AG04449 (cell line): ENCODE measurements at regions of chr2 and their contacts with region 1.

Region 1: DNA sequence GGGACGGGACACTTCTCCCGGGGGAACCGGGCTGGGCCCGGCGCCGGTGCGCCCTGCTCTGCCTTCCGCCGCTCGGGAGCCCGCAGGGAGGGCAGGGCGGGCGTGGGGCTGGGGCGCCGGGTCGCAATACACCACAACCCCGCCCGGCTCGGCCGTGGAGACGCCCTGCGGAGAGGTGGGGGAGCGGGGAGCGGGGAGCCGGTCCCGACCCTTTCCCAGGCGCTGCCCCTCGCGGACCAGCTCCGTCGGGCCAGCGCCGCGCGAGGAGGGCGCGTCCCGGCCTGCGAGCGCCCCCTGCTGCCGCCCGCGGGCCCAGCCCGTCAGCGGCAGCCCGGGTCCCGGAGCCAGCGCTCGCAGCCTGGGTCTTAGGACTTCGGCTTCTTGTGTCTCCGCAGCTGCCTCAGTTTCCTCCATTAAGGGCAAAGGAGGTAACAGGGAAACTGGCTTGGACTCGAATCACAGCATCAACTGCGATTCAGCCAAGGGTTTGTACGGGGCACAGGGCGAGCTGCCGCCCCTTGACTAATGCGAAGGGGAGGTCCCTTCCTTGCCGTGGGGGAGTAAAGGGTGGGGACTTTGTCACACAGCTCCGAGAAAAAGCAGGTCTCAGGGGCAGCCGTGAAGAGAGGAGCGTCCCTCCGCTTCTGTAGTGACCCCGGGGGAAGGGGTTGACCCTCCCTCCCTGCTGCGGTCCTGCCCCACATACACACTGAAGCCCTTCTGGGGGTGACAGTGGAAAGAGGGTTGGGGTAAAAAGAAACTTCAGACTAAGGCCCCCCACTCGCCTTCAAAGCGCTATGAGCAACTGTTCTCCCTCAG is 717 bp upstream of the ADRA2B start:
- DNase-seq: no peak
- H3K4me3 ChIP-seq: peak overlapping the region; percentile 32
- CTCF ChIP-seq: peak; percentile 43

Region 2: DNA sequence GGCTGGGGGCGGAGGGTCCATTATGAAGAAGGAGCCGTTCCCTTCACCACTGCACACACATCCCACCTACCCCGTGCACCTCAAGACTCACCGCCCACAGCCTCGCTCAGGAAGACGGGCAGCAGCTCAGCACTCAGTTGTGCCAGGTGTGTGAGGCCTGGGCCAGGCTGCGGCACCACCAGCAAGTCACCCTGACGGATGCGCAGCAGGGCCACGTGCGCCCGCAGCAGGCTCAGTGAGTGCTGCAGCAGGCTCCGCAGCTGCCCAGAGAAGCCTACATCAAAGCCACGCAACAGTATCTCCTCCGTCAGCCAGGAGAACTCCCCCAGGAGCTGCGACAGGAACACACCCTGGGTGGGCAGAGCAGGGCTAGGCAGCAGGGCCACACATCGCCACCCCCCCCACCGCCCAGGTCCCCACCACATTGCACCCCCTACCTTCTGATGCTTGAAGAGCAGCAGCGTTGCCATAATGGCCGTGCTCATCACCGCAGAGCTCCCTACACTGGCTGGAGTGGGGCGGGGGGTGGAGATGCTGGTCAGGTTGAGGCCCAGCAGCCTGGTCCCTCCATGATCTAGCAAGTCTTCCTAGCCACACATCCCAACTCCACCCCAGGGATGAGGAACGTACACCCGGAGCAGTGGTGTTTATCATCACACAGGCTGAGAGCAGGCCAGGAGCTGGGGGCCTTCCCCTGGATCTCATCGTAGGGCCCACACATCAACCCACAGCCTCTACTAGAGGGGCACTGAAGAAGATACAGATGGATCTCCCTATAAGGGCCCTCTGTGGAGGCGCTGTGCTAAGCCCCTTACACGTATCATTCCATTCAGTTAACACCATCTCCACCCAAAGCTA is 92.5 kb before region 1 on chr2:
- CTCF ChIA-PET with region 1: interaction called, 63 read pairs
- POLR2A ChIA-PET with region 1: no interaction called
- DNase-seq: no peak
- H3K4me3 ChIP-seq: no peak overlapping the region
- CTCF ChIP-seq: no peak

Region 3: DNA sequence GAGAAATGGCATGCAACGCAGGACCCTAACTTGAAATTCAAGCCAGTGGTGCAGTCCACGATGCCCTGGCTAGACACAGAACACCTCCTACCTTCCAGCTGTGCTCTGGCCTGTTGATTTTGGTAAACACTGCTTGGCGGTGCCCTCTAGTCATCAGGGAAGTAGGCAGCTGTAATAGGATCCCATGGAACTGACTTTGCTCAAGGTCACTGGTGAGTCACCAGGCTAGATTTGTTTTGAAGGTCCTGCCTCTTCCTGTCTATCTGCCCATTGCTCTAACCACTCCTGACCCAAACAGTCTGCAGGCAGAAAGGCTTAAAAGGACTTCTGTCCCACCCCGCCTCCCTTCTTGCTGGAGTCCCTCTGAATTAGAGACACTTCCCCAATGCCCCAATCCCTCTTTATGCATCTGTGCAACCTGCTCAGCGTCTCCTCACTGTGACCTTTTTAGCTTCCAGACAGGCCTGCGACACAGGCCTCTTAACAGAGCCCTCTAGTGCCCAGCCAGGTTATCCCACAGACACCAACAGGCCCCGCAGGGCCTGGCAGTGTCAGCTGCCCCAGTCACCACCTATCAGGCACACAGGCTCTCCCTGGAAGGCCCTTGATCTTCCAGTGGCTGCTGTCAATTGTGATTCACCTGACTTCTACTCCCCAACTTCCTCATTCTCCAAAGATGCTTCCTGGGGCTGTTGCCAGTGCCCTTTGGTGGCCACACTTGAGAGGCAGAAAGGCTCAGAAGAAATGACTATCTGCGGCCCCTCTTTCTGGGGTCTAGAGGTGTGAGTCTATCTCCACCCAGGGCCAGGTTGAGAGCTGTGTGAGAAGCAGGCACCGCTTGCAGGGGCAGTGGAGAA is 143.5 kb after region 1 on chr2:
- CTCF ChIA-PET with region 1: interaction called, 10 read pairs
- POLR2A ChIA-PET with region 1: no interaction called
- DNase-seq: peak; percentile 37
- H3K4me3 ChIP-seq: no peak overlapping the region
- CTCF ChIP-seq: peak; percentile 27

Region 4: DNA sequence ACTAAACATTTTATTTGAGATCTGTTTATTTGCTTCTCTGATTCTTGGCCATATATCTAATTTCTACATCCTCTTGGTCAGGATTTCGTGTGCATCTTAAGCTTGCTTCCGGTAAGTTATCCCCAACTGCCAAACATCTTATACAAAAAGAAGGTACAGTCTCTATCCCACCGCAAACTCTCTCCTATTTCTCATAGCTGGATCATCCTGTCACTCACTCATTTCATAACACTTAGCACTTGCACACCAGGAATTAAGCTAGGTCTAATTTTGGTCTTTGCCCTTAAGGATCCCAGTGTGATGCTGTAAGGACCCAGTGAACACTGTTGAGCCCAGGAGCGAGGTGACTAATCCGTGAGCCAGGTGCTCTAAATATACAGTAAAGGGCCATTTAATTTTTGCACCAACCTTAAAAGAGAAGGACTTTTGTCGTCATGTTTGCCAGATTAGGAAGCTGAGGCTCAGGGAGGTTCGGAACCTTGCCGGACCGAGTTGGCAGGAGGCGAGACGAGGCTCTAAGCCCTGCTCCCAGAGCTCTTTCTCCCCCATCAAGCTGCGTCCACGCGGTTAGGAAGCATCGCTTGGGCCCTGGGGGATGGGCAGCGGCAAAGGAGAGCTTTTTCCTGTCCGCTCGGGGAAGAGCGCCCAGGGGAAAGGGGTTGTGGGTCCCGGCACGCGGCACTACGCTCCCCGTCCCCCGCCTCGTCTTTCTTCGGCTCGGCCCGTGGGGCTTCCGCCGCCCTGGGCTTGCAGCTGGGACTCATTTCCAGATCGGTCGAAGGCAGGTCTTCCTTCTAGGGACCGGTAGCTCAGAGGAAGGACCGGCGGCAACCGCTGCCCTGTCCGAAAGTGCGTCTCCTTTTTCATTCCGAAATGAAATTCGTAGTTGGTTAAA is 203.9 kb after region 1 on chr2:
- CTCF ChIA-PET with region 1: no interaction called
- POLR2A ChIA-PET with region 1: no interaction called
- DNase-seq: no peak
- H3K4me3 ChIP-seq: peak overlapping the region; percentile 65
- CTCF ChIP-seq: no peak

Region 5: GRCh38 chr2:97950329-97951154 is 1833.5 kb after region 1 on chr2:
- CTCF ChIA-PET with region 1: no interaction called
- POLR2A ChIA-PET with region 1: no interaction called
- DNase-seq: peak; percentile 68
- H3K4me3 ChIP-seq: no peak overlapping the region; the same call in 1 of the 2 replicates
- CTCF ChIP-seq: no peak